H1 (cell line): ENCODE measurements at regions of chr1 and their contacts with region 1.

Region 1: GRCh38 chr1:20151906-20152598 is 12.9 kb downstream of the PLA2G2F start:
- DNase-seq: peak; percentile 61 to 95
- H3K4me3 ChIP-seq: peak overlapping the region in 3 of 4 experiments; percentile 34 to 50 (median 38); a peak in 4 of 8 replicates
- H3K27ac ChIP-seq: no peak overlapping the region
- H3K4me1 ChIP-seq: peaks cover 0 to 11% (median 5%) of the 10 kb centered on the region in 4 experiments; a peak in 6 of 7 replicates
- H3K27me3 ChIP-seq: no peaks in the 10 kb centered on the region
- CTCF ChIP-seq: peak; percentile 89 to 92 (median 90)
- EP300 ChIP-seq: no peak
- POLR2A ChIP-seq: no peak
- RAD21 ChIP-seq: peak; percentile 96 to 97

Region 2: DNA sequence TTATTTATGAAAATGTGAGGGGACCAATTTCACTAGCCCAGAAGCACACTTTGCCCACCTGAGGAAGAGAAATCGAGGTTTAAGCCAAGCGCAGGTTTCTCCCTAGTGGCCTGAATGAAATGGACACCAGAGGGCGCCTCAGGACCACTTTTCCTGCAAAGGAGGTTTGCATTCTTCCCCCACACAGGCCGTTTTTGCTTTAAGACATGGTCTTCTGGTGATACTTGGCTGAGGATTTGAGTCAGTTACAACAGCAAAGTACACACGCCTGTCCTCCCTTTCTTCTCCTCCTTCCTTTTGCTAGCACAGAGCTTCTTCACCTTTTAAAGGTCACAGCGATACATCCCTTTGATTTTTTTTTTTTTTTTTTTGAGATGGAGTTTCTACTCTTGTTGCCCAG is 234.0 kb before region 1 on chr1:
- CTCF ChIA-PET with region 1: interaction called, 127 read pairs
- POLR2A ChIA-PET with region 1: interaction called, 4 read pairs
- DNase-seq: peak; percentile 43 to 92
- H3K4me3 ChIP-seq: no peak overlapping the region
- H3K27ac ChIP-seq: no peak overlapping the region
- H3K4me1 ChIP-seq: peaks cover 0 to under 1% (median 0%) of the 10 kb centered on the region in 4 experiments; a peak in 1 of 7 replicates
- H3K27me3 ChIP-seq: no peaks in the 10 kb centered on the region
- CTCF ChIP-seq: peak; percentile 72 to 95 (median 87)
- EP300 ChIP-seq: no peak
- POLR2A ChIP-seq: no peak
- RAD21 ChIP-seq: peak; percentile 96 to 98

Region 3: DNA sequence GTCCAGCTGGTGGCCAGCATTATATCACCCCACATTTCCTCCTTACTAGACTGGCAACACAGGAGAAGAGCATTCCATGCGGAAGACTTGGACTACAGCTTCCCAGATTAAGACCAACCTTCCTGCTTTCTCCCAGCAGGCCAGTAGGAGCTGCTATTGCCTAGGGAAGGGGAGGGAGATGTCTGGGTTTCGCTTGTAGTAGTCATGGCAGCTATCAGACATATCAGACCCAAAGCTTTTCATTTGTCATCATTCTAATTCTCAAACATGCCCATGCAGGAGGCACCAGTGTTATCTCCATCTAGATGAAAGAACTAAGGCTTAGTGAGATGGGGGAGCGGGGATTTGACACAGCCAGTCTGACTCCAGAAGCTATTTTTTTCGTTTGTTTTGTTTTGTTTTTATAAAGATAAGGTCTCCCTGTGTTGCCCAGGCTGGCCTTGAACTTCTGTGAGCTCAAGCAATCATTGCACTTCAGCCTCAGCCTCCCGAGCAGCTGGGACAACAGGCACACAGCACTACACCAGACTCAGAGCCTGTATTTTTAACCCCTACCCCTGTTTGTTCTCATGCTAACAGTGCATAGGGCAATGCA is 177.1 kb before region 1 on chr1:
- CTCF ChIA-PET with region 1: interaction called, 89 read pairs
- POLR2A ChIA-PET with region 1: interaction called, 3 read pairs
- DNase-seq: peak; percentile 34 to 64
- H3K4me3 ChIP-seq: no peak overlapping the region
- H3K27ac ChIP-seq: no peak overlapping the region
- H3K4me1 ChIP-seq: peaks cover 0 to 8% (median 0%) of the 10 kb centered on the region in 4 experiments; a peak in 2 of 7 replicates
- H3K27me3 ChIP-seq: no peaks in the 10 kb centered on the region
- CTCF ChIP-seq: peak; percentile 87 to 100 (median 95)
- EP300 ChIP-seq: no peak
- POLR2A ChIP-seq: no peak
- RAD21 ChIP-seq: peak; percentile 100

Region 4: GRCh38 chr1:20100632-20101355 is 51.3 kb before region 1 on chr1:
- CTCF ChIA-PET with region 1: interaction called, 75 read pairs
- POLR2A ChIA-PET with region 1: no interaction called
- DNase-seq: peak; percentile 47 to 75
- H3K4me3 ChIP-seq: no peak overlapping the region
- H3K27ac ChIP-seq: no peak overlapping the region
- H3K4me1 ChIP-seq: peaks cover 0 to 3% (median 0%) of the 10 kb centered on the region in 4 experiments; a peak in 2 of 7 replicates
- H3K27me3 ChIP-seq: no peaks in the 10 kb centered on the region; a peak in 1 of 7 replicates
- CTCF ChIP-seq: peak; percentile 67 to 89 (median 79)
- EP300 ChIP-seq: no peak
- POLR2A ChIP-seq: no peak
- RAD21 ChIP-seq: peak; percentile 87 to 90

Region 5: DNA sequence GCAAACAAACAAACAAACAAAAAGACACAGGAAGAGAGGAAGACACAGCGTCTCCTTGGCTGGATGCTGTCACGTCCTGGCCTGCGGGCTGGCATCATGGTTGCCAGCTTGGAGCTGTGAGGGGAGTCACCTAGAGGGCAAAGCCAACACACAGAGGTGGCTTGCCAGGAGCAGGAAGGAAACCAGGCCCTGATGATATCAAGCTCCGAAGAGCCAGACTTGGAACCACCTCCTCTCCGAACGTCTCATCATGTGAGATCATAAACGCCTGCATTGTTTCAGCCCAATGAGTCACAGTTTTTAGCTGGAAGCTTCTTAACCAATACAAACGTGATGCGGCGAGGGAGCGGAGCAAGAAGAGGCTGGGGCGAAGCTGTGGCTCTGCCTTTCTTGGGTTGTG is 41.4 kb before region 1 on chr1:
- CTCF ChIA-PET with region 1: interaction called, 14 read pairs
- POLR2A ChIA-PET with region 1: interaction called, 4 read pairs
- DNase-seq: no peak
- H3K4me3 ChIP-seq: no peak overlapping the region
- H3K27ac ChIP-seq: no peak overlapping the region
- H3K4me1 ChIP-seq: peaks cover 2 to 5% (median 3%) of the 10 kb centered on the region in 4 experiments; a peak in 4 of 7 replicates
- H3K27me3 ChIP-seq: no peaks in the 10 kb centered on the region
- CTCF ChIP-seq: no peak
- EP300 ChIP-seq: no peak
- POLR2A ChIP-seq: no peak
- RAD21 ChIP-seq: no peak

Region 6: GRCh38 chr1:20124456-20125057 is 27.5 kb before region 1 on chr1:
- CTCF ChIA-PET with region 1: interaction called, 23 read pairs
- POLR2A ChIA-PET with region 1: no interaction called
- DNase-seq: no peak
- H3K4me3 ChIP-seq: no peak overlapping the region
- H3K27ac ChIP-seq: no peak overlapping the region
- H3K4me1 ChIP-seq: no peaks in the 10 kb centered on the region
- H3K27me3 ChIP-seq: no peaks in the 10 kb centered on the region
- CTCF ChIP-seq: no peak
- EP300 ChIP-seq: no peak
- POLR2A ChIP-seq: no peak
- RAD21 ChIP-seq: no peak

Region 7: GRCh38 chr1:20194757-20195461 is 42.9 kb after region 1 on chr1:
- CTCF ChIA-PET with region 1: interaction called, 79 read pairs
- POLR2A ChIA-PET with region 1: no interaction called
- DNase-seq: peak in 1 of 2 experiments; percentile 82
- H3K4me3 ChIP-seq: no peak overlapping the region; a peak in 1 of 8 replicates
- H3K27ac ChIP-seq: no peak overlapping the region
- H3K4me1 ChIP-seq: peaks cover 0 to 7% (median under 1%) of the 10 kb centered on the region in 4 experiments; a peak in 4 of 7 replicates
- H3K27me3 ChIP-seq: peaks cover 0 to 2% (median 0%) of the 10 kb centered on the region in 4 experiments; a peak in 2 of 7 replicates
- CTCF ChIP-seq: peak; percentile 83 to 92 (median 91)
- EP300 ChIP-seq: no peak
- POLR2A ChIP-seq: no peak
- RAD21 ChIP-seq: peak; percentile 67 to 77